ENCODE measurements at regions of chr5 and their contacts with region 1.

Region 1: DNA sequence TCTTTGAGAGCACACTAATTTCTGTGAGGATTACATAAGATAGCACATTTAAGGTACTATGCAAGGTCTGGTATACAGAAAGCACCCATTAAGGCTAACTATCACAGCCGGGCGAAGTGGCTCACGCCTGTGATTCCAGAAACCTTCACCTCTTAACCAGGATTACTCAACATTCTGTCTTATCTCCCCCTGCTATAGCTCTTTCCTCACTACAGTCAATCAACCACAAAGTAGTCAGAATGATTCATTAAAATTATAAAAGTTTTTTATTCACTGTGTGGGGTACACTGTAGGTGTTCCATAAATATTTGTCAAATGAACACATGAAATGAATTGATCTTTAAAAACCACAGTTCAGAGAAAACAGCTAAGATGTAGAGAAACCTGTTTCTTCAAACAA is 48.7 kb downstream of the CHD1 start:
- DNase-seq: no peak
- H3K4me3 ChIP-seq: no peak overlapping the region
- H3K4me3 Mint-ChIP-seq: no peak overlapping the region
- H3K27ac Mint-ChIP-seq: no peak overlapping the region
- H3K4me1 ChIP-seq: no peaks in the 10 kb centered on the region
- H3K4me1 Mint-ChIP-seq: no peaks in the 10 kb centered on the region
- H3K27me3 ChIP-seq: no peaks in the 10 kb centered on the region
- H3K27me3 Mint-ChIP-seq: no peaks in the 10 kb centered on the region
- CTCF ChIP-seq: no peak

Region 2: GRCh38 chr5:98865690-98866089 is 14.5 kb before region 1 on chr5:
- CTCF ChIA-PET with region 1: no interaction called
- POLR2A ChIA-PET with region 1: no interaction called
- intact Hi-C with region 1: loop called (anchors 2 kb)
- DNase-seq: no peak
- H3K4me3 ChIP-seq: no peak overlapping the region
- H3K4me3 Mint-ChIP-seq: peak overlapping the region; percentile 58
- H3K27ac Mint-ChIP-seq: peak overlapping the region; percentile 85
- H3K4me1 ChIP-seq: peaks cover 38% of the 10 kb centered on the region
- H3K4me1 Mint-ChIP-seq: peaks cover 42% of the 10 kb centered on the region
- H3K27me3 ChIP-seq: no peaks in the 10 kb centered on the region
- H3K27me3 Mint-ChIP-seq: no peaks in the 10 kb centered on the region
- CTCF ChIP-seq: no peak